Left ventricle myocardium superior (tissue), 1 donor: ENCODE measurements at regions of chrX and their contacts with region 1.

Region 1: DNA sequence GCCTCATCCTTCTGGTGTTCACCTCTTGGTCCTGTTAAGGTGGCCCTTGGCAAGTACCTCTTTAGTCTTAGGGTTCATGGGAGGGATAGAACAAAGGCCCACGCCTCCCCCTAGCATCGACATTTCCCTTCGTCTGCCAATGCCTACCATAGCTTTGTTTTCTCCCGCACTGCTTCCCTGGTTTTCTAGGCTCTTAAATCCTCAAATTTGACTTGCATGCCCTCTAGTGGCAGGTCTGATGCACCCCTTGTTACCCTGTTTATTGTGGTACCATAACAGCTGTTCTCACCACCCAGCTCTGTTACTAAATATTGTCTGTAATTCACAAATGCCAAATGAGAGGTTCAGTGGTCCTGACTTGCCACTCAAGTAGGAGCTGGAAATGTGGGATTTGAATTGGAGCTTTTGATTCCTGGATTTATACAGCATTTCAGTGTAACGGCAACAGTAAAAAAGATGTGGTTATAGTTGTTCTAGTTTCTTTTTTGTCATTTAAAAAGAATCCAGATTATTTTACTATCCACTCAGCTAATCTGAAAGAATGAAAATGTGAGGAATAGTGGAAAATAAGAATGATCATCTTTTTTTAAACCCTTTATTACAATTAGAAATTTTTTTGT is 100.1 kb downstream of the REPS2 start:
- DNase-seq: peak; percentile 42
- ATAC-seq: peak; percentile 80

Region 2: DNA sequence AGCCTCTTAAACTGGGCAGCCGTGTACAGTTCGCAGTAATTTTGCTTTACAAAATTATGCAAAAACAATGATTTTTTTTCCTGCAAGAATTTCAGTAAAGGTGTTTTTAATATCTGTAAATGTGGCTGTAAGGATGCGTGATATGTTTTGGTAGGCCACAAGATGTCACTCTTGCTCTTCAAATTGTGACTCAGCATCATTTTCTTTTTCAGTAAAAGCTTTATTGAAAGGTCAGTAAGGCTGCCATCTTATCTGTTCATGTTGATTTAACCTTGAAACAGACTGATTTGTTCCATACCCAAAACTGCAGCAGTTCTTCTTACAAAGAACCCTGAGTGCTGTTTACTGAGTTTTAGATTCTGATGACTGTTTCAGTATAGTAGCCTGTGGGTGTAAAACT is 220.4 kb before region 1 on chrX:
- intact Hi-C with region 1: loop called (anchors 2 kb)
- DNase-seq: no peak
- ATAC-seq: peak; percentile 20

Region 3: GRCh38 chrX:16882702-16883486 is 163.7 kb before region 1 on chrX:
- intact Hi-C with region 1: loop called (anchors 5 kb)
- DNase-seq: peak; percentile 66
- ATAC-seq: peak; percentile 89